ENCODE measurements at regions of chr15 and their contacts with region 1.

Region 1: GRCh38 chr15:58770857-58771620 is at the start of gene MINDY2:
- DNase-seq: peak; percentile 97
- ATAC-seq: peak; percentile 95
- H3K4me3 ChIP-seq: peak within 1 kb of the TSS; percentile 80 to 99 (median 94)
- H3K4me3 Mint-ChIP-seq: peak within 1 kb of the TSS; percentile 90
- H3K27ac ChIP-seq: peak within 1 kb of the TSS; percentile 86 to 87
- H3K27ac Mint-ChIP-seq: peak within 1 kb of the TSS; percentile 96
- H3K4me1 ChIP-seq: peaks cover 28 to 32% of the 10 kb centered on the region in 2 donors
- H3K4me1 Mint-ChIP-seq: peaks cover 19% of the 10 kb centered on the region
- H3K27me3 ChIP-seq: no peaks in the 10 kb centered on the region
- H3K27me3 Mint-ChIP-seq: no peaks in the 10 kb centered on the region
- CTCF ChIP-seq: peak; percentile 46
- total RNA-seq, gene MINDY2: 16.6 and 17.0 TPM in 2 replicates

Region 2: DNA sequence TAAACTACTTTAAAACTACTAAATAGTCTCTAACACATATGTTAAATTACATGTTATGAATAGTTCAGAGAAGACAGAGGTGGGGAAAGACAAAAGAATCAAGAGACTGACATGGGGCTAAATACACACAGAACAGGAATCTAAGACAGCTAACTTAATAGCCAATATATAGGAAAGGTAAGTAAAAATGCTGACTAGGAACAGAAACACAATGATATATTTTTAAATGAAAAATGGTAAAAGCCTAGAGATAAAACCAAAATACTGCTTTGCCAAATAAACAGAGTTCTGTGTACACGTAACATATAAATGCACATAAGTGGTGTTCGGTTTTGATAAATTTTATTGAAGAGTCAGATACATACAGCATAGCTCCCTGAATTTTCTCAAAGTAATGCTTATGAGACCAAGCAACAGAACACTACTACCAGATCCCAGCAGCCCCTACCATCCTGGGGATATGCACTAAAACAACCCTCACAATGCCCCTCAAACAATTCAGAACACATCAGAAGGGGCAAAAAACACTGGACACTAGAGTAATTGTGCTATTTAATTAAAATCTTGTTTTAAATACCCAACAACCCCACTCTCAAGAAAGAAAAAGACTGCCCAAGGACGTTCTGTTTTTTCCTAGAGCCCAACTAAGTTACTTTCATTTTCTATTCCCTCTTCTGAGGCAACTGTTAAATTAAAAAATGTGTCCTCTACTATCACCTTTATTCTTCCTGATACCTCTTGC is 142.7 kb before region 1 on chr15:
- CTCF ChIA-PET with region 1: no interaction called
- POLR2A ChIA-PET with region 1: no interaction called
- intact Hi-C with region 1: loop called (anchors 2 kb)
- DNase-seq: peak; percentile 38
- ATAC-seq: peak; percentile 21
- H3K4me3 ChIP-seq: peak overlapping the region in 4 of 5 experiments; percentile 23 to 53 (median 35)
- H3K4me3 Mint-ChIP-seq: peak overlapping the region; percentile 84
- H3K27ac ChIP-seq: peak overlapping the region; percentile 54 to 74
- H3K27ac Mint-ChIP-seq: peak overlapping the region; percentile 50
- H3K4me1 ChIP-seq: peaks cover 7 to 11% of the 10 kb centered on the region in 2 donors
- H3K4me1 Mint-ChIP-seq: peaks cover 34% of the 10 kb centered on the region
- H3K27me3 ChIP-seq: no peaks in the 10 kb centered on the region
- H3K27me3 Mint-ChIP-seq: no peaks in the 10 kb centered on the region
- CTCF ChIP-seq: no peak

Region 3: DNA sequence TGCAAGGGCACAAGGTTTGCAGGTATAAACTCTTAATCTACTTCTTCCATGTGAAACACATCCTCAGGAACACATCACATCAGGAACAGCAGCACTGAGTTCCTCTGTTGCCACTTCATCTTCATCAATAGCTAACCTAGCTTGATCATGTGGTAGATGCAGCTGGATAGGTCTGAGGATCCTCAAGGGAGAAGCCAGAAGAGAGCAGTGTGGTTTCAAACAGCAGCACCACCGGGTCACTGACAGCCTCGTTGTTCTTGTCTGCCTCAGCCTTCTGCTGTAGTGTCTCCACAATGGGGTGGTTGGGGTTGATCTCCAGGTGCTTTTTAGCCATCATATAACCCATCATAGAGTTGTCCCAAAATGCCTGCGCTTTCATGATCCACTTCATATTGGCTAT is 80.3 kb before region 1 on chr15:
- CTCF ChIA-PET with region 1: interaction called, 10 read pairs
- POLR2A ChIA-PET with region 1: no interaction called
- intact Hi-C with region 1: no loop called
- DNase-seq: peak; percentile 49
- ATAC-seq: peak; percentile 87
- H3K4me3 ChIP-seq: no peak overlapping the region
- H3K4me3 Mint-ChIP-seq: peak overlapping the region; percentile 23
- H3K27ac ChIP-seq: no peak overlapping the region
- H3K27ac Mint-ChIP-seq: no peak overlapping the region
- H3K4me1 ChIP-seq: peaks cover 12 to 15% of the 10 kb centered on the region in 2 donors
- H3K4me1 Mint-ChIP-seq: peaks cover 46% of the 10 kb centered on the region
- H3K27me3 ChIP-seq: no peaks in the 10 kb centered on the region
- H3K27me3 Mint-ChIP-seq: no peaks in the 10 kb centered on the region
- CTCF ChIP-seq: no peak

Region 4: GRCh38 chr15:58724466-58724865 is 46.6 kb before region 1 on chr15:
- CTCF ChIA-PET with region 1: interaction called, 4 read pairs
- POLR2A ChIA-PET with region 1: interaction called, 3 read pairs
- intact Hi-C with region 1: loop called (anchors 2 kb)
- DNase-seq: peak; percentile 81
- ATAC-seq: peak; percentile 89
- H3K4me3 ChIP-seq: peak overlapping the region in 1 of 5 experiments; percentile 19
- H3K4me3 Mint-ChIP-seq: peak overlapping the region; percentile 13
- H3K27ac ChIP-seq: peak overlapping the region; percentile 59 to 89
- H3K27ac Mint-ChIP-seq: peak overlapping the region; percentile 57
- H3K4me1 ChIP-seq: peaks cover 38 to 48% of the 10 kb centered on the region in 2 donors
- H3K4me1 Mint-ChIP-seq: peaks cover 58% of the 10 kb centered on the region
- H3K27me3 ChIP-seq: no peaks in the 10 kb centered on the region
- H3K27me3 Mint-ChIP-seq: no peaks in the 10 kb centered on the region
- CTCF ChIP-seq: no peak

Region 5: DNA sequence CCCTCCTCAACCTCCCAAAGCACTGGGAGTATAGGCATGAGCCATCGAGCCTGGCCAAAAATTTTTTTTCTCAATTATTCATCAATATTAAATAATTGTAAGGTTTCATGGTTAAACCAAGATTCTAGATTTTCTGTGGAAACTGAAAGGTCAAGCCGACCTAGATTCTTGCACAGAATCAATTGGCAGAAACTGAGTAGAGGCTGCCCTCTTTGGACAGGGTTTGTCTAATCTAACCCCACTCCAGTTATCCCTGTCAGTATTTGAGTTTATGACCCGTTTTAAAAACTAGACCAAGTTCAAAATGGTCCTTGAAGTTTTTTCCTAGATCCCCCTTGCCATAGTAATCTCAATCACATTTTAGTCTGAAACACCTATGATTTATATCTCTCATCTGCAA is 12.9 kb before region 1 on chr15:
- CTCF ChIA-PET with region 1: interaction called, 16 read pairs
- POLR2A ChIA-PET with region 1: interaction called, 4 read pairs
- intact Hi-C with region 1: no loop called
- DNase-seq: no peak
- ATAC-seq: no peak
- H3K4me3 ChIP-seq: no peak overlapping the region
- H3K4me3 Mint-ChIP-seq: no peak overlapping the region
- H3K27ac ChIP-seq: no peak overlapping the region
- H3K27ac Mint-ChIP-seq: no peak overlapping the region
- H3K4me1 ChIP-seq: no peaks in the 10 kb centered on the region
- H3K4me1 Mint-ChIP-seq: no peaks in the 10 kb centered on the region
- H3K27me3 ChIP-seq: no peaks in the 10 kb centered on the region
- H3K27me3 Mint-ChIP-seq: peaks cover 8% of the 10 kb centered on the region
- CTCF ChIP-seq: no peak

Region 6: GRCh38 chr15:59104912-59105732 is 334.1 kb after region 1 on chr15 and contains the start of gene CCNB2:
- CTCF ChIA-PET with region 1: no interaction called
- POLR2A ChIA-PET with region 1: no interaction called
- intact Hi-C with region 1: loop called (anchors 10 kb)
- DNase-seq: peak; percentile 92
- ATAC-seq: peak; percentile 100
- H3K4me3 ChIP-seq: peak within 1 kb of the TSS; percentile 58 to 75 (median 66)
- H3K4me3 Mint-ChIP-seq: peak within 1 kb of the TSS; percentile 91
- H3K27ac ChIP-seq: peak within 1 kb of the TSS; percentile 50 to 79
- H3K27ac Mint-ChIP-seq: peak within 1 kb of the TSS; percentile 94
- H3K4me1 ChIP-seq: peaks cover 9 to 13% of the 10 kb centered on the region in 2 donors
- H3K4me1 Mint-ChIP-seq: peaks cover 14% of the 10 kb centered on the region
- H3K27me3 ChIP-seq: no peaks in the 10 kb centered on the region
- H3K27me3 Mint-ChIP-seq: no peaks in the 10 kb centered on the region
- CTCF ChIP-seq: no peak
- total RNA-seq, gene CCNB2: 0.67 TPM in 1 of 2 replicates, not detected in the other